Thyroid gland (tissue), 4 donors: ENCODE measurements at regions of chr9 and their contacts with region 1.

Region 1: GRCh38 chr9:36499174-36499890 is 73.4 kb upstream of the MELK start:
- DNase-seq: no peak
- H3K4me3 ChIP-seq: no peak overlapping the region
- H3K27ac ChIP-seq: no peak overlapping the region
- H3K4me1 ChIP-seq: no peaks in the 10 kb centered on the region
- H3K27me3 ChIP-seq: no peaks in the 10 kb centered on the region
- CTCF ChIP-seq: no peak
- POLR2A ChIP-seq: no peak

Region 2: GRCh38 chr9:36543916-36544315 is 44.6 kb after region 1 on chr9:
- intact Hi-C with region 1: loop called (anchors 10 kb)
- DNase-seq: no peak
- H3K4me3 ChIP-seq: no peak overlapping the region
- H3K27ac ChIP-seq: no peak overlapping the region
- H3K4me1 ChIP-seq: no peaks in the 10 kb centered on the region
- H3K27me3 ChIP-seq: no peaks in the 10 kb centered on the region
- CTCF ChIP-seq: no peak
- POLR2A ChIP-seq: no peak

Region 3: GRCh38 chr9:36603006-36603405 is 103.7 kb after region 1 on chr9:
- intact Hi-C with region 1: no loop called
- DNase-seq: no peak
- H3K4me3 ChIP-seq: no peak overlapping the region
- H3K27ac ChIP-seq: no peak overlapping the region
- H3K4me1 ChIP-seq: no peaks in the 10 kb centered on the region
- H3K27me3 ChIP-seq: no peaks in the 10 kb centered on the region
- CTCF ChIP-seq: no peak
- POLR2A ChIP-seq: no peak

Region 4: GRCh38 chr9:36625006-36625615 is 125.8 kb after region 1 on chr9:
- intact Hi-C with region 1: no loop called
- DNase-seq: peak; percentile 73 to 76
- H3K4me3 ChIP-seq: no peak overlapping the region
- H3K27ac ChIP-seq: peak overlapping the region in 2 of 3 donors; percentile 39 to 66
- H3K4me1 ChIP-seq: peaks cover 8 to 9% of the 10 kb centered on the region in 2 donors
- H3K27me3 ChIP-seq: no peaks in the 10 kb centered on the region
- CTCF ChIP-seq: no peak
- POLR2A ChIP-seq: no peak